CD8-positive, alpha-beta T cell (primary cell): ENCODE measurements at regions of chr2 and their contacts with region 1.

Region 1: GRCh38 chr2:148483666-148484065 is 160.9 kb upstream of the EPC2 start:
- DNase-seq: no peak
- ATAC-seq: no peak
- H3K4me3 ChIP-seq: no peak overlapping the region
- H3K4me3 Mint-ChIP-seq: no peak overlapping the region
- H3K27ac ChIP-seq: no peak overlapping the region
- H3K27ac Mint-ChIP-seq: no peak overlapping the region
- H3K4me1 ChIP-seq: no peaks in the 10 kb centered on the region
- H3K4me1 Mint-ChIP-seq: no peaks in the 10 kb centered on the region
- H3K27me3 ChIP-seq: no peaks in the 10 kb centered on the region
- H3K27me3 Mint-ChIP-seq: no peaks in the 10 kb centered on the region
- CTCF ChIP-seq: no peak

Region 2: GRCh38 chr2:148201075-148202004 is 282.3 kb before region 1 on chr2:
- CTCF ChIA-PET with region 1: no interaction called
- POLR2A ChIA-PET with region 1: no interaction called
- intact Hi-C with region 1: no loop called
- DNase-seq: peak in 7 of 9 experiments; percentile 2 to 58 (median 26)
- ATAC-seq: no peak
- H3K4me3 ChIP-seq: no peak overlapping the region
- H3K4me3 Mint-ChIP-seq: no peak overlapping the region
- H3K27ac ChIP-seq: no peak overlapping the region
- H3K27ac Mint-ChIP-seq: no peak overlapping the region
- H3K4me1 ChIP-seq: no peaks in the 10 kb centered on the region
- H3K4me1 Mint-ChIP-seq: peaks cover 4% of the 10 kb centered on the region
- H3K27me3 ChIP-seq: no peaks in the 10 kb centered on the region
- H3K27me3 Mint-ChIP-seq: no peaks in the 10 kb centered on the region
- CTCF ChIP-seq: peak; percentile 23

Region 3: DNA sequence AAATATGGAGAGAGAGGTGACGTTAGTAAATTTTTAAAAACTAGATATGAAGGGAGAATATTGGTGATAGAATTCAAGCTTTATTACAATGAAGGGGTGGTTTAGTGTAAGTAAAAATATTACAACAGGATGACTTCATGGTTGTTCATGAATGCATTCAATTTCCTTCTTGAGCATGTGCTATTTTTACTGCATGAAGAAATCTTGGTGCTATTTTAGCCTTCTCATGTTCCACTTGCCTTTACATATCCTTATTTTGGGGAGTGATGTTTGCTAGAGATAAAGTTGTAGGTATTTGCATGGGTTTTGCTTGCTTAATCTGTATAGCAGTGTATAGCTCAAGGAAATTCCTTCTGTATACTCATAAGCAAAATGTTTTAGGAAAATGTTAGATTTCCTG is 1298.9 kb after region 1 on chr2:
- CTCF ChIA-PET with region 1: no interaction called
- POLR2A ChIA-PET with region 1: no interaction called
- intact Hi-C with region 1: loop called in 1 of 2 experiments (anchors 10 kb)
- DNase-seq: no peak
- ATAC-seq: no peak
- H3K4me3 ChIP-seq: no peak overlapping the region
- H3K4me3 Mint-ChIP-seq: no peak overlapping the region
- H3K27ac ChIP-seq: no peak overlapping the region
- H3K27ac Mint-ChIP-seq: no peak overlapping the region
- H3K4me1 ChIP-seq: no peaks in the 10 kb centered on the region
- H3K4me1 Mint-ChIP-seq: no peaks in the 10 kb centered on the region
- H3K27me3 ChIP-seq: no peaks in the 10 kb centered on the region
- H3K27me3 Mint-ChIP-seq: no peaks in the 10 kb centered on the region
- CTCF ChIP-seq: no peak